Activated CD8-positive, alpha-beta T cell treated with anti-CD3 and anti-CD28 coated beads, Interleukin-2, amount 10 ng/mL, durations not matched to agents 7 days and 5 days (primary cell): ENCODE measurements at regions of chr11 and their contacts with region 1.

Region 1: GRCh38 chr11:95150946-95151684 is 61.5 kb downstream of the ENDOD1 start:
- DNase-seq: peak; percentile 96
- ATAC-seq: peak; percentile 96
- H3K4me3 Mint-ChIP-seq: peak overlapping the region; percentile 82
- H3K27ac Mint-ChIP-seq: peak overlapping the region; percentile 91
- H3K4me1 Mint-ChIP-seq: peaks cover 38% of the 10 kb centered on the region
- H3K27me3 Mint-ChIP-seq: peaks cover 7% of the 10 kb centered on the region

Region 2: DNA sequence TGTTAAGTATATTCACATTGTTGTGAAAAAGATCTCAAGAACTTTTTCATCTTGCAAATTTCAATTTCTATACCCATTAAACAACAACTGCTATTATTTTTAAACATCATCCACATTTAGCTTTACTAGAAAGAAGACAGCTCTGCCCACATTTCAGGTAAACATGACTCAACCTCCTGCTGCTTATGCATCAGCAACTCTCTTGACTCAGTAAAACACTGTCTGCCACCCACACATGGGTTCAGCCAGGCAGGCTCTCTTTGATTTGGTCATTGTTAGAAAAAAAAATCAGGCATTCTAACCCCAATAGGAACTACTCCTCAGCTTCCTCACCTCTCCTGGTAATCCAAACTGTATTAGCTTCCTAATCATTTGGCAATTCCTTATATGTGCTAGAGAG is 66.6 kb before region 1 on chr11:
- CTCF ChIA-PET with region 1: interaction called, 144 read pairs
- POLR2A ChIA-PET with region 1: interaction called, 7 read pairs
- DNase-seq: peak; percentile 27
- ATAC-seq: no peak
- H3K4me3 Mint-ChIP-seq: no peak overlapping the region
- H3K27ac Mint-ChIP-seq: no peak overlapping the region
- H3K4me1 Mint-ChIP-seq: peaks cover 40% of the 10 kb centered on the region
- H3K27me3 Mint-ChIP-seq: no peaks in the 10 kb centered on the region

Region 3: DNA sequence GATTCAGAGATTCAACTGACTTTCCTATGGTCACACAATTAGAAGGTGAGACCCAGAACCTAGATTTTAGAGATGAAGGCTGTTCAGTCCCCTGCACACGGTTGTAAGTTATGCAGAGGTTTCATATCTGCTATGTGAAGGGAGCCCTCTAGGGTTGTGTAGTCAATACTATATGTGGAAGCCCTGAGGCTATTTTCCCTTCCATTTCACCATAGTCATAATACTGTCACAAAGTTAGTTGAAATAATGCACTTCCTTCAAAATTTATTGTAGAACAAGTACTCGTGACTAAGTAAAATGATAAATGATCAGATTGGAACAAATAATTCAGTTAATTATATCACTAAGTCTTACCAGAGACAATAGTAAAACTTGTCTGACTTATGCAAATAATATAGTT is 12.7 kb before region 1 on chr11:
- CTCF ChIA-PET with region 1: interaction called, 15 read pairs
- POLR2A ChIA-PET with region 1: interaction called, 4 read pairs
- DNase-seq: no peak
- ATAC-seq: peak; percentile 74
- H3K4me3 Mint-ChIP-seq: no peak overlapping the region
- H3K27ac Mint-ChIP-seq: no peak overlapping the region
- H3K4me1 Mint-ChIP-seq: peaks cover 14% of the 10 kb centered on the region
- H3K27me3 Mint-ChIP-seq: peaks cover 13% of the 10 kb centered on the region

Region 4: GRCh38 chr11:95182397-95182796 is 31.3 kb after region 1 on chr11:
- CTCF ChIA-PET with region 1: interaction called, 18 read pairs
- POLR2A ChIA-PET with region 1: no interaction called
- DNase-seq: no peak
- ATAC-seq: no peak
- H3K4me3 Mint-ChIP-seq: no peak overlapping the region
- H3K27ac Mint-ChIP-seq: no peak overlapping the region
- H3K4me1 Mint-ChIP-seq: no peaks in the 10 kb centered on the region
- H3K27me3 Mint-ChIP-seq: no peaks in the 10 kb centered on the region

Region 5: GRCh38 chr11:95715777-95716241 is 564.7 kb after region 1 on chr11:
- CTCF ChIA-PET with region 1: interaction called, 362 read pairs
- POLR2A ChIA-PET with region 1: no interaction called
- DNase-seq: peak; percentile 34
- ATAC-seq: peak; percentile 70
- H3K4me3 Mint-ChIP-seq: no peak overlapping the region
- H3K27ac Mint-ChIP-seq: no peak overlapping the region
- H3K4me1 Mint-ChIP-seq: peaks cover 24% of the 10 kb centered on the region
- H3K27me3 Mint-ChIP-seq: no peaks in the 10 kb centered on the region

Region 6: DNA sequence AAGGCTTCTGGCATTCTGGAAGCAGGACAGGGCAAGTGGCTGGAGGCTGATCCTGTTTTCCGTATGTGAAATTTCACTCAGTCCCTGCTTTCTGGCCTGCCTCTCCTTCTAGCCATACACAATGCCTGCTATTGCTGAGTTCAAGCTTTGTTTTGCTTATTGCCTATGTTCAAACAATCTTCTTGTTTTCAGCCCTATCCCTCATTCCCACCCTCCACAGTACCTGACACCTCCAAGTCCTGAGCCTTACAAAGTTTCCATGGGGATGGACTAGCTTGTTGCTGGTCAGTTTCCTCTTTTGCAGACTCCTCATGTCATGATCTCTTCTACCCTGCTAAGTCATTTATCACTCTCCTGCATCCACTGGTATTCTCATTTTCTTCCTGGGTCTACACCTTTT is 600.4 kb after region 1 on chr11:
- CTCF ChIA-PET with region 1: interaction called, 294 read pairs
- POLR2A ChIA-PET with region 1: no interaction called
- DNase-seq: no peak
- ATAC-seq: no peak
- H3K4me3 Mint-ChIP-seq: no peak overlapping the region
- H3K27ac Mint-ChIP-seq: no peak overlapping the region
- H3K4me1 Mint-ChIP-seq: no peaks in the 10 kb centered on the region
- H3K27me3 Mint-ChIP-seq: peaks cover 23% of the 10 kb centered on the region

Region 7: GRCh38 chr11:95790123-95790932 is 639.2 kb after region 1 on chr11 and contains the start of gene CEP57:
- CTCF ChIA-PET with region 1: interaction called, 64 read pairs
- POLR2A ChIA-PET with region 1: interaction called, 37 read pairs
- DNase-seq: peak; percentile 97
- ATAC-seq: peak; percentile 69
- H3K4me3 Mint-ChIP-seq: peak within 1 kb of the TSS; percentile 99
- H3K27ac Mint-ChIP-seq: peak within 1 kb of the TSS; percentile 100
- H3K4me1 Mint-ChIP-seq: peaks cover 55% of the 10 kb centered on the region
- H3K27me3 Mint-ChIP-seq: no peaks in the 10 kb centered on the region
- total RNA-seq, gene CEP57: 85.4 to 86.6 TPM